SK-N-SH (cell line): ENCODE measurements at regions of chr13 and their contacts with region 1.

Region 1: DNA sequence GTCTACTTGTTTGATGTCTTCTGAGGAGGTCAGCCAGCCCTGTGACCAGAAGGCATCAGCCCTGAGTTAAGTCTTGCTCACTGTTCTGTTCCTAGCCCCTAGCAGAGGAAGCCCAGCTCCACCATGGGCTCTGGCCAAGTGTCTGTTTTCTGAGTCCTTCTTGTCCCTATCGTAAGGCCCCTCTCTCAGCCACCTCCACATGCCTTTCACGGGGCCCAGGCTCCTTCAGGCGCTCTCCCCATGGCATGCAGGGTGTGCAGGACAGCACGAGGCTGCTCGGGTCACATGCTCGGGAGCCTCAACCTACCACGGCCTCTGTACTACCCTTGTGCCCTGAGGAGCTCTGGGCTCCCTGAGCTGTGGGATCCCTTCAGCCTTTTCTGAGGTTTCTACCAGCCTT is 47.8 kb upstream of the LATS2 start:
- DNase-seq: no peak
- H3K4me3 ChIP-seq: no peak overlapping the region
- H3K27ac ChIP-seq: no peak overlapping the region
- H3K4me1 ChIP-seq: peaks cover 0 to 11% of the 10 kb centered on the region in 2 experiments; a peak in 2 of 4 replicates
- H3K27me3 ChIP-seq: no peaks in the 10 kb centered on the region
- CTCF ChIP-seq: no peak
- EP300 ChIP-seq: no peak
- RAD21 ChIP-seq: no peak

Region 2: DNA sequence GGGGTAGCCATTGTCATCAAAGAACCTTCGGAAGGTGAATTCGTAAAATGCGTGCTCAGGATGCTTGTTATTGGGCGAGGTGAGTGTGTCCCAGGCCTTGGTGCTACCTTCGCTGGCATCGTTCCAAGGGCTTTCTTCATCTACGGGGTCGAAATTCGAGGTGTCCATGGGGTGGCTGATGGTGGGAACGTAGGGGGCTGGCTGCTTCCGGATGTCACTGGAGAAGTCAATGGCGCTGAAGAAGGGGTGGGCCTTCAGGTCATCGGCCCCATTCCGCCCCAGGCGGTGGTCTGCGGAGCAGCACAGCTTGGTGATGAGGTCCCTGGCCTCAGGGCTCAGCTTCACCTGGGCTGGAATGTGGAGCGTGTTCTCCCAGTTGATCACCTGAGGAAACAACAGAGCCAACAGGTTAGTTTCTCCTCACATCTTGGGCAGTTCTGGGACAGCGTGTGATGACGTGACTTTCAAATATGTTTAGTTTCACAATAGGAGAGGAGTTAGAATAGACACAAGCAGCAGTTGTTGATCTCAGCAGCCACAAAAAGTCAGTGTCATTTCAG is 134.1 kb before region 1 on chr13:
- CTCF ChIA-PET with region 1: no interaction called
- POLR2A ChIA-PET with region 1: no interaction called
- DNase-seq: no peak
- H3K4me3 ChIP-seq: no peak overlapping the region
- H3K27ac ChIP-seq: no peak overlapping the region
- H3K4me1 ChIP-seq: no peaks in the 10 kb centered on the region
- H3K27me3 ChIP-seq: no peaks in the 10 kb centered on the region
- CTCF ChIP-seq: no peak
- EP300 ChIP-seq: no peak
- RAD21 ChIP-seq: no peak

Region 3: DNA sequence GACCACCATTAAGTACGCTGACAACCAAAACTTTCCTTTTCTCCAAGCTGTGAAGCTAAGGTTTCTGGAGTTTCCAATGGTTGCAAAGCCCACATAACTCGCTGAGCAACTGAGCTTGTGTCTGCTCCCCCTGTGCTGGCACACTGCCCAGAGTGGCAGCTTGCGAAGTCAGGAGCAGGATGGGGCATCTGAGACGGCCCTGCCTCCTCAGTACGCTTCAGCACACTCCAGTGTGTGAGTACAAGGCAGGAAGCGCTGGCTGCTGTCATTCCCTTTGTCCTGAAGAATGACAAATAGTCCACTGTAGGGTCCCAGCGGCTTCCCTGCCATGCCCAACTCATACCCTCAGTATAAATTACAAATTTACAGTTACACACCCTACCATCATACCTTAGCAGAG is 15.7 kb after region 1 on chr13:
- CTCF ChIA-PET with region 1: no interaction called
- POLR2A ChIA-PET with region 1: no interaction called
- DNase-seq: peak; percentile 67
- H3K4me3 ChIP-seq: no peak overlapping the region
- H3K27ac ChIP-seq: peak overlapping the region in 1 of 2 experiments; percentile 18; a peak in 1 of 4 replicates
- H3K4me1 ChIP-seq: peaks cover 0 to 2% of the 10 kb centered on the region in 2 experiments; a peak in 2 of 4 replicates
- H3K27me3 ChIP-seq: no peaks in the 10 kb centered on the region
- CTCF ChIP-seq: no peak
- EP300 ChIP-seq: no peak
- RAD21 ChIP-seq: no peak; the same call in 1 of the 2 replicates

Region 4: DNA sequence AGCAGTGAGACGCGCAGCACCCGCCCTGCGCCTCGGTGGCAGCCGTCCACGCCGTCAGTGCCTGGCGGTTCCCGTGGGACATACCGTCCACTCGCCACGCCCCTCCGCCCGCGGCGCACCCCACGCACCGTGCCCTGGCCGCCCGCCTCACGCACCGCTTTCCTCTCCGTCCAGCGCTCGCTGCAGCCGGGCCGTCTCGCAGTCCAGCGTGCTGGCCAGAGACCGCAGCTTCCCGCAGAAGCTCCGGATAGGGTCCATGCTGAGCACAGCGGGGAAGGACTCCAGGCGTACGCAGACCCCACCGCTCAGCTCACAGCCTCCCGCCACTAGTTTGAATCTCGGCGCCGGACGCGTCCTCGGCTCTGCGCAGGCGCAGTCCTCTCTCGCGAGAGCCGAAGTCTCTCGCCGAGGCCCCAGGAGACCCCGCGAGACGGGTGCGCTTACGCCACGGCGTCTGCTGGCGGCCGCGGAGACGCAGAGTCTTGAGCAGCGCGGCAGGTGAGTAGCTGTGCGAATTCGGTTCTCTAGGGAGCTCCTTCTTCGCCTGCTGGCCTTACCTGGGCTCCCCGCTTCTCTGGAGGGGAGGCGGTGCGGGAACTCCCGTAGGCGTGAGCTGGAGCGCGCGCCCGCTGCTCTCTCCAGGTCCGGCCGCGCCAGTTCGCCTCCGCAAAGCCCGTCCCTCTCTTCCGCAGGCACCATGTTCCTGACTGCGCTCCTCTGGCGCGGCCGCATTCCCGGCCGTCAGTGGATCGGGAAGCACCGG is 67.2 kb after region 1 on chr13 and contains the starts of genes MRPL57 and SKA3:
- CTCF ChIA-PET with region 1: interaction called, 10 read pairs
- POLR2A ChIA-PET with region 1: no interaction called
- DNase-seq: peak; percentile 98
- H3K4me3 ChIP-seq: peak within 1 kb of the TSS; percentile 77 to 86
- H3K27ac ChIP-seq: peak within 1 kb of the TSS; percentile 87 to 94
- H3K4me1 ChIP-seq: peaks cover 3 to 5% of the 10 kb centered on the region in 2 experiments; a peak in 2 of 4 replicates
- H3K27me3 ChIP-seq: no peaks in the 10 kb centered on the region
- CTCF ChIP-seq: no peak
- EP300 ChIP-seq: no peak
- RAD21 ChIP-seq: no peak
- polyA plus RNA-seq, gene MRPL57: 16.4 and 19.9 TPM in 2 replicates
- polyA plus RNA-seq, gene SKA3: 5.9 and 6.4 TPM in 2 replicates